ENCODE measurements at regions of chr6 and their contacts with region 1.

Region 1: DNA sequence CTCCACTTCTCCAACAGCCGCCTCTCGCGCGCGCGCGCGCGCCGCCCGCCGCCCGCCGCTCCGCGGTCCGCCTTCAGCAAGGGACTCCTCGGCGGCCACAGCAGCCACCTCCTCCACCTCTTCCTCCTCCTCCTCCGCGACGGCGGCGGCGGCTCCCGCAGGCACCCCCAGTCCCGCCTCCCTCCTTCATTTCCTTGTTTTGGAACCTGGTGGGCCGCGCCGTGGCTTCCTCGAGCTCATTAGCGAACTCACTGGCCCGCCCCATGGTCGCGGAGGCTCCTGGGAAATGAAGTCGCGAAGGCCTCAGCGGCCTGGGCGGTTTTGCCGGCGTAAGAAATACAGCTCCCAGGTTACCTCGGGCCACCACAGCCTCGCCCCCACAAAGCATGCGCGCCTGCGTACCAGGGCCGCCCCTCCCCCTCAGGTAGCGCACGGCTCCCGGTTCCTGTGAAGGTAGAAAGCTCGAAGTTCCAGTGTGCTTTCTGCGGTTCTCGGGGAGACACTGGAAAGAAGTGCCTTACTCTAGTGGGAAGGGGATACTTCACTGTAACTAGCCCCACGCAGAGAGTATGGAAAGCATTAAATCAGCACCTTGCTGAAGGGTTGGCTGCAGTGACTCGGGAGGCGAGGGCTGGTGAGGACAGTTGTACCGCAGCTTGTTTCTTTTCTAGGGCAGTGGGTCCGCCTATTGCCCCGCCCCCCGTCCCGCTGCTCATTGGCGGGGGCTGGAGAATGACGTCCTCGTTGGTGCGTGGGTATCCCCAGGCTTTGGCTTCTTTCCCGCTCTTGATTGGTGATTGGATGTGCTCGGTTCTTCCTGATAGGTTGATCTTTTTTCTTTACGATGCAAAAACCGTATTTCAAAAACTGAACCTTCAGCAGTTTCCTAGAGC is at the start of gene CDK19:
- DNase-seq: peak; percentile 98
- H3K4me3 ChIP-seq: peak within 1 kb of the TSS; percentile 58
- H3K27ac ChIP-seq: peak within 1 kb of the TSS; percentile 80
- H3K4me1 ChIP-seq: peaks cover 30% of the 10 kb centered on the region
- H3K27me3 ChIP-seq: no peaks in the 10 kb centered on the region
- CTCF ChIP-seq: no peak
- total RNA-seq, gene CDK19: 34.0 and 36.8 TPM in 2 replicates

Region 2: GRCh38 chr6:110543106-110543505 is 272.4 kb before region 1 on chr6:
- CTCF ChIA-PET with region 1: no interaction called
- POLR2A ChIA-PET with region 1: no interaction called
- intact Hi-C with region 1: loop called (anchors 10 kb)
- DNase-seq: peak; percentile 83 to 85
- H3K4me3 ChIP-seq: no peak overlapping the region
- H3K27ac ChIP-seq: no peak overlapping the region
- H3K4me1 ChIP-seq: peaks cover 47% of the 10 kb centered on the region
- H3K27me3 ChIP-seq: no peaks in the 10 kb centered on the region
- CTCF ChIP-seq: no peak

Region 3: DNA sequence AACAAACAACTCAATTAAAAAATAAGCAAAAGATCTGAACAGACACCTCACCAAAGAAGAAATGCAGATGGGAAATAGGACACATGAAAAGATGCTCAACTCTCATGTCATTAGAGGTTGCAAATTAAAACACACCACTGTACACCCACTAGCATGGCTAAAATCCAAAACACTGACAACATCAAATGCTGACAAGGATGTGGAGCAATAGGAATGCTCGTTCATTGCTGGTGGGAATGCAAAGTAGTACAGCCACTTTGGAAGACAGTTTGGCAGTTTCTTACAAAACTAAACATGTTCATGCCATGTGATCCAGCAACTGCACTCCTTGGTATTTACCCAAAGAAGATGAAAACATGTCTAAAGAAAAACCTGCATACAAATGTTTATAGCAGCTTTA is 47.4 kb before region 1 on chr6:
- CTCF ChIA-PET with region 1: no interaction called
- POLR2A ChIA-PET with region 1: interaction called, 20 read pairs
- intact Hi-C with region 1: no loop called
- DNase-seq: no peak
- H3K4me3 ChIP-seq: no peak overlapping the region
- H3K27ac ChIP-seq: no peak overlapping the region
- H3K4me1 ChIP-seq: no peaks in the 10 kb centered on the region
- H3K27me3 ChIP-seq: no peaks in the 10 kb centered on the region
- CTCF ChIP-seq: no peak

Region 4: GRCh38 chr6:110841266-110841665 is 25.8 kb after region 1 on chr6:
- CTCF ChIA-PET with region 1: interaction called, 19 read pairs
- POLR2A ChIA-PET with region 1: interaction called, 24 read pairs
- intact Hi-C with region 1: no loop called
- DNase-seq: no peak
- H3K4me3 ChIP-seq: no peak overlapping the region
- H3K27ac ChIP-seq: no peak overlapping the region
- H3K4me1 ChIP-seq: no peaks in the 10 kb centered on the region
- H3K27me3 ChIP-seq: no peaks in the 10 kb centered on the region
- CTCF ChIP-seq: no peak

Region 5: DNA sequence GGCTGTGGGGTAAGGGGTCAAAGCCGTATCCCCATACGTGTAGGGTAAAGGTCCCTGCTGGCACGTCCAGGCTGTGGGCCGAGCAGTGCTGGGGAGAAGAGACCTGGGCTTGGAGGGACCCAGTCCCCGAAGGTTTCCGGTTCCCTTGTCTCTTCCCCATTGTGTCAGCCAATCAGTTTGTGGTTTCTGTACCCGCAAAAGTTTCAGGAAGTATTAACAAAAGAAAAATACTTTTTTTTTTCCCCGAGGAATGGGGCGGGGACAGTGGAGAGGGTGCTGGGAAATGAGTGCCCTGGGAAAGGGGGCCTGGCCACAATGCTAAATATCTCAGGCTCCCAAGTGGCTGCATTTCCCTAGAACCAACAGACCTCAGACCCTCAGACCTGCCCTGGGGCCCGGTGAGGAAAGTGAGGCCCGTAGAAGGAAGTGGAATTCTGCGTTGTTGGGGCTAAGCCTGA is 43.9 kb after region 1 on chr6:
- CTCF ChIA-PET with region 1: no interaction called
- POLR2A ChIA-PET with region 1: no interaction called
- intact Hi-C with region 1: no loop called
- DNase-seq: peak in 1 of 2 experiments; percentile 5
- H3K4me3 ChIP-seq: no peak overlapping the region
- H3K27ac ChIP-seq: no peak overlapping the region
- H3K4me1 ChIP-seq: peaks cover 5% of the 10 kb centered on the region
- H3K27me3 ChIP-seq: no peaks in the 10 kb centered on the region
- CTCF ChIP-seq: no peak

Region 6: GRCh38 chr6:110949679-110950285 is 134.3 kb after region 1 on chr6:
- CTCF ChIA-PET with region 1: no interaction called
- POLR2A ChIA-PET with region 1: interaction called, 16 read pairs
- intact Hi-C with region 1: no loop called
- DNase-seq: peak; percentile 5 to 56
- H3K4me3 ChIP-seq: no peak overlapping the region
- H3K27ac ChIP-seq: no peak overlapping the region
- H3K4me1 ChIP-seq: peaks cover 30% of the 10 kb centered on the region
- H3K27me3 ChIP-seq: no peaks in the 10 kb centered on the region
- CTCF ChIP-seq: peak; percentile 84

Region 7: DNA sequence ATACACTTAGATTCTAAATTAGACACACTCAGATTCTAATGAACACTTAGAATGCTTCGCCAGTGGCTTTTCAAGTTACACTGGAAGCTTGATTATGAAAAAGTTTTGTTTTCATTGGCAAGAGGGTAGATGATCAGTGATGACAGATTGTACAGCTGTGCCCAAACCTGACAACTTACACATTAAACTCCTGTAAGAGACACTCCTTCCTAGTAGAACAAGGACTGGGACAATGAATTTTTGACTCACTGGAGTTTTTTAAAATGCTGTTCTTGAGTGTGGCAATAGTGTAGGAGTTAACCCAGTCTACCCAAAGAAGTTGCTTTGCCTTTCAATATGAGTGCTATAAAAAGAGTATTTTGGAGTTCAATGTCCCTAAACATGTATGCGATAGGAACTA is 412.6 kb after region 1 on chr6:
- CTCF ChIA-PET with region 1: no interaction called
- POLR2A ChIA-PET with region 1: interaction called, 12 read pairs
- intact Hi-C with region 1: no loop called
- DNase-seq: peak in 1 of 2 experiments; percentile 57
- H3K4me3 ChIP-seq: peak overlapping the region; percentile 1; the same call in 1 of the 2 replicates
- H3K27ac ChIP-seq: peak overlapping the region; percentile 82
- H3K4me1 ChIP-seq: peaks cover 44% of the 10 kb centered on the region
- H3K27me3 ChIP-seq: no peaks in the 10 kb centered on the region
- CTCF ChIP-seq: no peak

Measured in PC-9 (cell line).